ENCODE measurements at regions of chr5 and their contacts with region 1.

Region 1: DNA sequence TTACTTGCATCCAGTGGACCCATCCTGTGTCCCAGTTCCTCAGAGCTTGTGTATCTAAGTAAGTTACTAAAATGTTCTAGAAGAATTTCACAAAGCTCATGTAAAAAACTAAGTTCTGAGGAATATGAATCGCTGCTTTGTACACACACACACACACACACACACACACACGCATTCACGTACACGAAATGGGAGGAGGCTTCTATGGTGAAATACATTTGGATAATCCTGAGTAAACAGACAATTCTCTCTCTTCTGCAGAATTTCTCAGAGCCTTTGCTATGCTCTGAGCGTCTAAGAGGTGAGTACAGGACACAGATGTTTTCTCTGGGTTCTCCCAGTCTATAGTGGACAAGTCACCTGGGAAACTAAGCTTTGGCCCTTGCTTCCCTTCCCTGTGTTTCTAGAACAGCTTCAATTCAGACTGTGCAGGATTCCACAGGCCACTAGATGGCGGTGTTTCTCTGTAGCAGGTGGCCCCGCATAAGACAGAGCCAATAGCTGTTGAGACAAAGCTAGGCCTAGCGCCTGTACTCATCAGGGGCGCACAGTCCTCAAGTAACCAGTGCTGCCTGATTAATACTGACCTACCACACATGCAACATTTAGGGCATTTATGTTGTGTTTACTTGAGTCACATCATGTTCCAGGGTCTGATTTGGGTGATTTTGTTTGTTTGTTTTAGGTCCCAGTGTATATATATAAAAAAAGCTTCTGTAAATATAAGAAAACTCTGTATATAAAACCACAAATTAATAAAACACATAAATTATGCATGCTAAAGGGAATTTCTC is 114.8 kb downstream of the LIFR start:
- DNase-seq: peak; percentile 83 to 88 (median 86)
- ATAC-seq: peak; percentile 94 to 98 (median 97)
- H3K4me3 ChIP-seq: no peak overlapping the region
- H3K27ac ChIP-seq: no peak overlapping the region
- H3K4me1 ChIP-seq: peaks cover 0 to 13% (median 0%) of the 10 kb centered on the region in 12 donors
- H3K27me3 ChIP-seq: peaks cover 0 to 76% (median 0%) of the 10 kb centered on the region in 9 donors
- CTCF ChIP-seq: peak; percentile 93 to 98 (median 96)
- POLR2A ChIP-seq: no peak

Region 2: GRCh38 chr5:38307845-38308244 is 133.8 kb before region 1 on chr5:
- intact Hi-C with region 1: no loop called
- DNase-seq: no peak
- ATAC-seq: peak in 1 of 4 donors; percentile 53
- H3K4me3 ChIP-seq: no peak overlapping the region
- H3K27ac ChIP-seq: peak overlapping the region in 10 of 12 donors; percentile 21 to 77 (median 63)
- H3K4me1 ChIP-seq: no peaks in the 10 kb centered on the region
- H3K27me3 ChIP-seq: no peaks in the 10 kb centered on the region
- CTCF ChIP-seq: no peak
- POLR2A ChIP-seq: no peak

Region 3: GRCh38 chr5:38515646-38516045 is 74.0 kb after region 1 on chr5:
- intact Hi-C with region 1: loop called in 2 of 10 experiments (anchors 5 to 10 kb)
- DNase-seq: no peak
- ATAC-seq: peak in 2 of 4 donors; percentile 52 to 55
- H3K4me3 ChIP-seq: no peak overlapping the region
- H3K27ac ChIP-seq: no peak overlapping the region
- H3K4me1 ChIP-seq: no peaks in the 10 kb centered on the region
- H3K27me3 ChIP-seq: no peaks in the 10 kb centered on the region
- CTCF ChIP-seq: peak in 10 of 12 donors; percentile 12 to 52 (median 34)
- POLR2A ChIP-seq: no peak

Region 4: GRCh38 chr5:38556599-38557305 is 115.1 kb after region 1 on chr5 and contains the start of gene LIFR:
- intact Hi-C with region 1: loop called in 7 of 10 experiments (anchors 2 to 10 kb)
- DNase-seq: peak; percentile 87 to 93 (median 89)
- ATAC-seq: peak; percentile 56 to 93 (median 88)
- H3K4me3 ChIP-seq: peak within 1 kb of the TSS; percentile 69 to 96 (median 86)
- H3K27ac ChIP-seq: peak within 1 kb of the TSS; percentile 95 to 100 (median 98)
- H3K4me1 ChIP-seq: peaks cover 0 to 46% (median 27%) of the 10 kb centered on the region in 12 donors
- H3K27me3 ChIP-seq: peaks cover 0 to 25% (median 0%) of the 10 kb centered on the region in 9 donors
- CTCF ChIP-seq: no peak
- POLR2A ChIP-seq: peak in 1 of 2 donors; percentile 63
- total RNA-seq, gene LIFR: 34.2 to 66.8 (median 39.8) TPM

Region 5: GRCh38 chr5:38672059-38672788 is 230.6 kb after region 1 on chr5:
- intact Hi-C with region 1: loop called (anchors 1 to 5 kb)
- DNase-seq: no peak
- ATAC-seq: no peak
- H3K4me3 ChIP-seq: no peak overlapping the region
- H3K27ac ChIP-seq: no peak overlapping the region
- H3K4me1 ChIP-seq: peaks cover 0 to 3% (median 0%) of the 10 kb centered on the region in 12 donors
- H3K27me3 ChIP-seq: no peaks in the 10 kb centered on the region
- CTCF ChIP-seq: no peak
- POLR2A ChIP-seq: no peak

Region 6: GRCh38 chr5:38922199-38922598 is 480.5 kb after region 1 on chr5:
- intact Hi-C with region 1: loop called in 5 of 10 experiments (anchors 10 kb)
- DNase-seq: peak in 3 of 5 donors; percentile 20 to 40 (median 33)
- ATAC-seq: peak; percentile 51 to 68 (median 62)
- H3K4me3 ChIP-seq: no peak overlapping the region
- H3K27ac ChIP-seq: no peak overlapping the region
- H3K4me1 ChIP-seq: peaks cover 0 to 36% (median 1%) of the 10 kb centered on the region in 12 donors
- H3K27me3 ChIP-seq: no peaks in the 10 kb centered on the region
- CTCF ChIP-seq: peak; percentile 44 to 90 (median 68)
- POLR2A ChIP-seq: no peak

Measured in heart left ventricle (tissue), 16 donors.